ENCODE measurements at regions of chr11 and their contacts with region 1.

Region 1: GRCh38 chr11:45233121-45233803 is 52.9 kb downstream of the SYT13 start:
- DNase-seq: peak; percentile 93
- ATAC-seq: peak; percentile 94
- H3K4me3 Mint-ChIP-seq: no peak overlapping the region
- H3K27ac Mint-ChIP-seq: no peak overlapping the region
- H3K4me1 Mint-ChIP-seq: peaks cover 4% of the 10 kb centered on the region
- H3K27me3 Mint-ChIP-seq: peaks cover 12% of the 10 kb centered on the region
- CTCF ChIP-seq: peak; percentile 92

Region 2: DNA sequence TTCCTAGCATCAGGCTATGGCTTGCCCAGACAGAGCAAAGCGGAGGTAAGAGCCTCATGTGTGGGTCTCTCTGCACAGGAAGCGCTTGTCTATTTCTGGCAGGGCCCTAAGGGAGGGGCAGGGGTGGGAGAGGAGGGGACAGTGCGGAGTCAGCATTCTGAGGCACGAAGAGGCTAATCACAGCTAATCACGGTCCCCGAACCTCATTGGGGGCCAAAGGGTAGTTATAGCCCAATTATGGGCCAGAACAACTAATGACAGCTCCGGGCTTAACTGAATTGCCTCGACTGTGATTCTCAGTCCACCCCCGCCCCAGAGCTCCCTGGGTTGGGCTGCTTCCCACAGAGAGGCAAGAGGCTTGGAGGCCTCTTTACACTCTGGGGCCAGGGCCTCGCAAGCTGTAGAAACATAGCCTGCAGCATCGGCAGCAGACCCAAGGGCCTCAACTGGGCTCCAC is 159.5 kb before region 1 on chr11:
- CTCF ChIA-PET with region 1: no interaction called
- POLR2A ChIA-PET with region 1: no interaction called
- DNase-seq: no peak
- ATAC-seq: no peak; the same call in 1 of the 2 replicates
- H3K4me3 Mint-ChIP-seq: no peak overlapping the region
- H3K27ac Mint-ChIP-seq: no peak overlapping the region
- H3K4me1 Mint-ChIP-seq: peaks cover 5% of the 10 kb centered on the region
- H3K27me3 Mint-ChIP-seq: no peaks in the 10 kb centered on the region
- CTCF ChIP-seq: no peak

Region 3: GRCh38 chr11:45098929-45099328 is 134.3 kb before region 1 on chr11:
- CTCF ChIA-PET with region 1: no interaction called
- POLR2A ChIA-PET with region 1: no interaction called
- DNase-seq: no peak
- ATAC-seq: no peak
- H3K4me3 Mint-ChIP-seq: no peak overlapping the region
- H3K27ac Mint-ChIP-seq: no peak overlapping the region; the same call in 1 of the 2 replicates
- H3K4me1 Mint-ChIP-seq: peaks cover 17% of the 10 kb centered on the region
- H3K27me3 Mint-ChIP-seq: 0 out of 2 replicates have a peak, but pooled peaks cover 5% of the 10 kb centered on the region
- CTCF ChIP-seq: no peak

Region 4: DNA sequence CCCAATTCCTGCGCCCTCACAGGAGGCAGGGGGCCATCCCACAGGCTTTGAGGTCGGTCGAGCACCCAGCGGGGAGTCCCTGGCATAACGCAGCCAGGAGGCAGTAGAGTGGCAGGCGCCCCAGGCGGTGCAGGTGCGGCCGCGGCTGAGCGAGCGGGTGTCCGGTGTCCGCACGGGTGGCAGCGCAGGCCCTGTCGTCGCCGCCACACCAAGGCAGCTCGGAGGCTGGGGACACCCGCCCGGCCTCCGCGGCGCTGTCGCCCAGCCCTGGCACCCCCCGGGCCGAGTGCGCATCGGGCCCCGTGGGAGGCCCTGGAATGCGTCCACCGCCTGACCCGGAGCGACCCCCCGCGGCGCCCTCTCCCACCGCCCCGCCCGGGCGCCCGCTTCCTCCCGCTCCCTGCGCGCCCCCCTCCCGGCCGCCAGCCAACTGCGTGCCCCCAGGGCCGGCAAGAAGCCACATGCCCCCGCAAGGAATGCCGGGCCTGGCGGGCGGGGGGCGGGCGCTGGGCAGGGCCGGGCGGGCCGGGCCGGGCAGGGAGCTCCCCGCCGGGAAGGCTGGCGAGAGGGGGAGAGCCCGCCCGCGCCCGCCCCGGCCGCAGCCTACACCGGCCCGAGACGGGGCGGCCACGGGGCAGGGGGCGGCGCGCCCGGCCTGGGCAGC is 53.0 kb before region 1 on chr11:
- CTCF ChIA-PET with region 1: interaction called, 39 read pairs
- POLR2A ChIA-PET with region 1: no interaction called
- DNase-seq: peak; percentile 63
- ATAC-seq: peak; percentile 71
- H3K4me3 Mint-ChIP-seq: peak overlapping the region; percentile 82
- H3K27ac Mint-ChIP-seq: no peak overlapping the region
- H3K4me1 Mint-ChIP-seq: peaks cover 10% of the 10 kb centered on the region
- H3K27me3 Mint-ChIP-seq: peaks cover 9% of the 10 kb centered on the region; the same call in 1 of the 2 replicates
- CTCF ChIP-seq: no peak

Region 5: GRCh38 chr11:45204761-45205160 is 28.5 kb before region 1 on chr11:
- CTCF ChIA-PET with region 1: interaction called, 15 read pairs
- POLR2A ChIA-PET with region 1: no interaction called
- DNase-seq: peak; percentile 60
- ATAC-seq: peak; percentile 88
- H3K4me3 Mint-ChIP-seq: no peak overlapping the region
- H3K27ac Mint-ChIP-seq: no peak overlapping the region
- H3K4me1 Mint-ChIP-seq: peaks cover 12% of the 10 kb centered on the region
- H3K27me3 Mint-ChIP-seq: no peaks in the 10 kb centered on the region
- CTCF ChIP-seq: no peak

Region 6: DNA sequence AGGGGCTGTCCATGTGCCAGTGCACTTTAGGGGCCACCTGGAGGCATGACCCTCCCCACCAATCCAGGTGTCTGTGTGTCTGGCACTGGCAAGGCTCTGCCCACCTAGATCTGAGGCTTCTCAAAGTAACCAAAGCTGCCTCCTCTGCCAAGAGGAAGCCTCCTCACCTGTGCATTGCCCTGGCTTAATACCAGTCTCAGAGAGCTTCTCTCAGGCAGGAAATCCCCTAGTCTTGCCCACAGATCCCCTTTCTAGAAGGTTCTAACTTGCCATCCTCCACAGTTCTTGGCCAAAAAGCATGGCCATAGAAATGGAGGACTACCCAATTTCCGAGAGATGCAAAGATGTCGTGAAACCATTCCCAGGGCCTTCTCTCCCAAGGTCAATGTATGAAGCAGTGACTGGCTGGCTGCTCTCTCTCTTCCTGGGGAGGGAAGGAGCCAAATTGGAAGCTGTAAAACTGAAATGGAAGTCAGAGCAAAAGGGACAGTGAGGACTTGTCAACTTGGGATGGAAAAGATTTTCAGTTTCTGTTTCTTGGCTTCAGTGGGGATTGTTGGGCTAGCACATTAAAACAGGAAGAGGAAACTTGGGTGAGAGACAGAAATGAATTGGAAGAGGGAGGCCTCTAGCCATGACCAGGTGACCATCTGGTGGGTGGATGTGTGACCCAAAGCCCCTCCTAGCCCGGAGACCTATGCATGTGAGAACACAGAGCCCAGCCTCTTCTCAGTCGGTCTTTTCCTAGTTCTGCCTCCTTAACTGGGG is 18.0 kb before region 1 on chr11:
- CTCF ChIA-PET with region 1: interaction called, 10 read pairs
- POLR2A ChIA-PET with region 1: no interaction called
- DNase-seq: no peak
- ATAC-seq: no peak
- H3K4me3 Mint-ChIP-seq: no peak overlapping the region
- H3K27ac Mint-ChIP-seq: no peak overlapping the region
- H3K4me1 Mint-ChIP-seq: peaks cover 4% of the 10 kb centered on the region
- H3K27me3 Mint-ChIP-seq: no peaks in the 10 kb centered on the region; the same call in 1 of the 2 replicates
- CTCF ChIP-seq: no peak

Region 7: DNA sequence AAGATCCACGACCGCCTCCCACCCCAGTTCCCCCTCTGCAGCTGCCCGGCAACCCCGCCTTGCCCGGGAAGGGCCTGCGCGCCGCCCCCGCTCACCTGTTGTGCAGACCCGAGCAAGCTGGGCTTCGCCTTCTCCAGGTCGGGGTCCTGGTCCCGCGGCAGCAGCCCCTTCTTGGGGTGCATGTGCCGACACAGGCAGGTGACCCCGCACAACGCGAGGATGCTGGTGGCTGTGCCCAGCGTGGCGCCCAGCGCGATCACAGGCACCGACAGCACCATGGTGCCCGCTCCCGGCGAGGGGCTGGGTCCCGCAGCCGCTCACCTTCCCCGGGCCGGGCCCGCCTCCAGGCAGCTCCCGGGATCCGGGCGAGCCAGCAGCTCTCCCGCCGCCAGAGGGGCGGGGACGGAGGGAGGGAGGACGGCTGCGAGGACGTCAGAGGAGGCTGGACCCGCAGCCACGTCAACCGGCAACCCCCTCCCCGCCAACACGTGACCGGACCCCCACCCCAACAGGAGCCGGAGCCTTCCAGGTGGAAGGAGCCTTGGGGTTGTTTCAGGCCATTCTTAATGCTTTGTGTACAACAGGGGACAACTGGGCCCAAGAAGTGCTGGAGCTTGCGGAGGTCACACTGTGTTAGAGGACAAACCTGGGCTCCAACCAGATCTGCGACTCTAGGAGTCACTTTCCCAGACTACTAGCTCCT is 52.8 kb after region 1 on chr11 and contains the start of gene SYT13:
- CTCF ChIA-PET with region 1: interaction called, 17 read pairs
- POLR2A ChIA-PET with region 1: interaction called, 3 read pairs
- DNase-seq: peak; percentile 89
- ATAC-seq: peak; percentile 92
- H3K4me3 Mint-ChIP-seq: peak within 1 kb of the TSS; percentile 72
- H3K27ac Mint-ChIP-seq: 0 out of 2 replicates have a peak within 1 kb of the TSS, but pooled peaks have one; percentile 3
- H3K4me1 Mint-ChIP-seq: peaks cover 20% of the 10 kb centered on the region
- H3K27me3 Mint-ChIP-seq: peaks cover 75% of the 10 kb centered on the region
- CTCF ChIP-seq: no peak
- total RNA-seq, gene SYT13: 10.8 to 15.1 TPM (median 12.0 TPM) in 3 replicates

Region 8: DNA sequence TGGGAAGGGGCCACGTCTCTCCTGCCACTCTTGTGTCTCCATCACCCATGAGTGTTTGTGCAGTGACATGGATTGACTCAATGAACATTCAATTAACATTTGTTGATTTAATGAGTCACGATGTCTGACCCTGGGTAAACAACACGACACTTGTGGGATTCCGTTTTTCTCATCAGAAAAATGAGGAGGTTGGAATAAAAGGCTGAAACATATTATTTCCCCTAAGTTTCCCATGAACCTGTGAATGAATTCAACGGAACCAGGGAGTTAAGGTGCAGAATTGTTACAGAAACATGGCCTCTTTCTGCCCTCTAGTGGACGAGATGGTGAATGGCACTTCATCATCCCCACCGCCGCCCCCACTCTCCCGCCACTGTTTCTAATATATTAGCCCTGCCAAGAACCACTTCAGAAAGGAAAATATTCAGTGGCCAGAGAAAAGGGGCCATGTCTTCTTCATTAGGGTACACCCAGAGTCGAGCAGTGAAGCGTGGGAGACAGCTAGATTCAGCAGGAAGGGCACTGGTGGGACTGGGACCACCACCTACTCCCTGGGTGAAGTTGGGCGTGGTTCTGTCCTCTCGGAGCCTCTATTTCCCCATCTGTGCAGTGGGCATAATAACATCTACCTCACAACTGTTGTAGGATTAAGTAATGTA is 99.1 kb after region 1 on chr11:
- CTCF ChIA-PET with region 1: interaction called, 10 read pairs
- POLR2A ChIA-PET with region 1: no interaction called
- DNase-seq: peak; percentile 53
- ATAC-seq: peak; percentile 66
- H3K4me3 Mint-ChIP-seq: no peak overlapping the region
- H3K27ac Mint-ChIP-seq: no peak overlapping the region
- H3K4me1 Mint-ChIP-seq: peaks cover 7% of the 10 kb centered on the region
- H3K27me3 Mint-ChIP-seq: peaks cover 34% of the 10 kb centered on the region
- CTCF ChIP-seq: peak; percentile 93

Region 9: GRCh38 chr11:45339729-45340519 is 106.7 kb after region 1 on chr11:
- CTCF ChIA-PET with region 1: interaction called, 13 read pairs
- POLR2A ChIA-PET with region 1: no interaction called
- DNase-seq: peak; percentile 98
- ATAC-seq: peak; percentile 99
- H3K4me3 Mint-ChIP-seq: peak overlapping the region; percentile 58
- H3K27ac Mint-ChIP-seq: peak overlapping the region; percentile 26; the same call in 1 of the 2 replicates
- H3K4me1 Mint-ChIP-seq: peaks cover 40% of the 10 kb centered on the region
- H3K27me3 Mint-ChIP-seq: no peaks in the 10 kb centered on the region; the same call in 1 of the 2 replicates
- CTCF ChIP-seq: peak; percentile 95

Measured in WTC11 (cell line).